GM10248 (cell line): ENCODE measurements at regions of chr6 and their contacts with region 1.

Region 1: DNA sequence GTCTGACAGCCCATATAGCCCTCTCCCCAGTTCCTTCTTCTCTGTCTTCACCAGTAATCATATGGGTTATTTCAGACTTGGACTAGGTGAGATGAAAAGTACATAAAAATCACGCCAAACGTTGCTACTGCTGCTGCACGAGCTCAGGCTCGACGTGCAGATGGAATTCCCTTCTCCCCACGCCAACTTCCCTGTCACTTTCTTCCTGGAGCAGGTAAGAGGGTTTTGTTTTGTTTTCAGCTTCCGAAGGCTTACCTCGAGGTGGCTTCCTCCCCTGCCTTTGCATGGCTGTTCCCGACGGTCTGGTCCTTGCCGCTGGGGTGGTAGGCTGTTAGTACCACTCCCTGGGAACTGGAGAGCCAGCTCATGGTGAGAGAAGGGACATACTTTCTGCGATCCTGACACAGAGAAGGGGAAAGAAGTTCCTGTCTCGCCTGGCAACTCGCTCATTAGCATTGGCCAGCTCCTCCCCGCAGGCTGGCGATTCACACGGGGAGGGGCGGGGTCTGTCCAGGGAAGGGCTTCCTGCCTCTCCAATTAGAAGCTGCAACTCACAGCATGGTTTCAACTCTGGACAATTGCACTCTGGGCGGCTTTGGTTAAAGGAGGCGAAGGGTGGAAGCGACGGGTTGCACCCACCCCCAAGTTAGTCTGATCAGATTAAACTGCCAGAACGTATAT is at the start of gene ARHGAP18:
- DNase-seq: peak; percentile 80
- CTCF ChIP-seq: no peak

Region 2: DNA sequence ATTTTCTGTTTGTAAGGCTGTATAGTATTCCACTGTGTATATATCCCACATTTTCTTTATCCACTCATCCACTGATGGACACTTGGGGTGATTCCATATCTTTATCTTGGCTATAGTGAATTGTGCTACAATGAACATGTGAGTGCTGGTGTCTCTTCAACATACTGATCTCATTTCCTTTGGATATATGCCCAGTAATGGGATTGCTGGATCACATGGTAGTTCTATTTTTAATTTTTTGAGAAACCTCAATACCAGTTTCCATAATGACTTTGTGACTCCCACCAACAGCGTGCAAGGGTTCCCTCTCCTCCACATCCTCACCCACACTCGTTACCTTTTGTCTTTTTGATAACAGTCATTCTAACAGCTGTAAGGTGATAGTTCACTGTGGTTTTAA is 165.9 kb before region 1 on chr6:
- CTCF ChIA-PET with region 1: no interaction called
- POLR2A ChIA-PET with region 1: no interaction called
- DNase-seq: no peak
- CTCF ChIP-seq: no peak

Region 3: GRCh38 chr6:129695373-129696027 is 14.4 kb before region 1 on chr6:
- CTCF ChIA-PET with region 1: interaction called, 29 read pairs
- POLR2A ChIA-PET with region 1: no interaction called
- DNase-seq: no peak
- CTCF ChIP-seq: no peak